CD4-positive, alpha-beta T cell (primary cell): ENCODE measurements at regions of chr19 and their contacts with region 1.

Region 1: GRCh38 chr19:58252102-58252685 is 23.5 kb downstream of the ZNF544 start:
- DNase-seq: no peak
- ATAC-seq: no peak
- H3K4me3 ChIP-seq: no peak overlapping the region
- H3K4me3 Mint-ChIP-seq: no peak overlapping the region
- H3K27ac ChIP-seq: no peak overlapping the region
- H3K27ac Mint-ChIP-seq: no peak overlapping the region
- H3K4me1 ChIP-seq: no peaks in the 10 kb centered on the region
- H3K4me1 Mint-ChIP-seq: no peaks in the 10 kb centered on the region
- H3K27me3 ChIP-seq: no peaks in the 10 kb centered on the region
- H3K27me3 Mint-ChIP-seq: no peaks in the 10 kb centered on the region
- CTCF ChIP-seq: no peak

Region 2: GRCh38 chr19:58182989-58183816 is 69.0 kb before region 1 on chr19 and contains the start of gene ZNF274:
- CTCF ChIA-PET with region 1: no interaction called
- POLR2A ChIA-PET with region 1: no interaction called
- intact Hi-C with region 1: no loop called
- DNase-seq: peak; percentile 89 to 96 (median 92)
- ATAC-seq: peak; percentile 85
- H3K4me3 ChIP-seq: peak within 1 kb of the TSS; percentile 99
- H3K4me3 Mint-ChIP-seq: peak within 1 kb of the TSS; percentile 97
- H3K27ac ChIP-seq: peak within 1 kb of the TSS; percentile 99 to 100
- H3K27ac Mint-ChIP-seq: peak within 1 kb of the TSS; percentile 100
- H3K4me1 ChIP-seq: peaks cover 27% of the 10 kb centered on the region
- H3K4me1 Mint-ChIP-seq: peaks cover 23% of the 10 kb centered on the region
- H3K27me3 ChIP-seq: no peaks in the 10 kb centered on the region
- H3K27me3 Mint-ChIP-seq: no peaks in the 10 kb centered on the region
- CTCF ChIP-seq: no peak
- total RNA-seq, gene ZNF274: 51.0 to 51.4 TPM

Region 3: GRCh38 chr19:58196901-58197616 is 55.1 kb before region 1 on chr19:
- CTCF ChIA-PET with region 1: no interaction called
- POLR2A ChIA-PET with region 1: no interaction called
- intact Hi-C with region 1: loop called in 1 of 2 experiments (anchors 1 kb)
- DNase-seq: peak in 1 of 14 experiments; percentile 21
- ATAC-seq: no peak
- H3K4me3 ChIP-seq: no peak overlapping the region
- H3K4me3 Mint-ChIP-seq: no peak overlapping the region
- H3K27ac ChIP-seq: no peak overlapping the region
- H3K27ac Mint-ChIP-seq: no peak overlapping the region
- H3K4me1 ChIP-seq: no peaks in the 10 kb centered on the region
- H3K4me1 Mint-ChIP-seq: no peaks in the 10 kb centered on the region
- H3K27me3 ChIP-seq: no peaks in the 10 kb centered on the region
- H3K27me3 Mint-ChIP-seq: no peaks in the 10 kb centered on the region
- CTCF ChIP-seq: no peak

Region 4: DNA sequence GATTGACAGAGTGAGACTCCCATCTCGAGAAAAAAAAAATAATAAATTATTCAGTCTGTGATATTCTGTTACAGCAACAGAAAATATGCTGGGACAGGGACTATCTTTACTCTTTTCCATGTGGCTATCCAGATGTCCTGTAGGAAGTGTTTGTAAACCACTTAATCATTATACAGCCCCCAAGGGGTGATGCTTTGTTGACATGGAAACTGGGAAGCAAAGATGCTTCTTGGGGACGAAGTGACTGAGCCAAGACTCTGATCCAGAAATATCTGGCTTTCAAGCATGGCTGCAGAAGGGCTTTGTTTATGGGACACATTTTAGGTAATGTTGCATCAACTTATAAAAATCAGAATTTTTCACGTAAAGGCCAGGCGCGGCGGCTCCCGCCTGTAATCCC is 32.0 kb after region 1 on chr19:
- CTCF ChIA-PET with region 1: no interaction called
- POLR2A ChIA-PET with region 1: no interaction called
- intact Hi-C with region 1: no loop called
- DNase-seq: no peak
- ATAC-seq: no peak
- H3K4me3 ChIP-seq: no peak overlapping the region
- H3K4me3 Mint-ChIP-seq: no peak overlapping the region
- H3K27ac ChIP-seq: no peak overlapping the region
- H3K27ac Mint-ChIP-seq: no peak overlapping the region
- H3K4me1 ChIP-seq: peaks cover 13% of the 10 kb centered on the region
- H3K4me1 Mint-ChIP-seq: peaks cover 29% of the 10 kb centered on the region
- H3K27me3 ChIP-seq: no peaks in the 10 kb centered on the region
- H3K27me3 Mint-ChIP-seq: no peaks in the 10 kb centered on the region
- CTCF ChIP-seq: no peak